ENCODE measurements at regions of chr7 and their contacts with region 1.

Region 1: GRCh38 chr7:65307651-65308299 is 65.9 kb upstream of the ZNF92 start:
- DNase-seq: peak; percentile 37
- H3K4me3 ChIP-seq: no peak overlapping the region
- H3K27ac ChIP-seq: no peak overlapping the region
- H3K27me3 ChIP-seq: no peaks in the 10 kb centered on the region
- CTCF ChIP-seq: peak; percentile 86

Region 2: DNA sequence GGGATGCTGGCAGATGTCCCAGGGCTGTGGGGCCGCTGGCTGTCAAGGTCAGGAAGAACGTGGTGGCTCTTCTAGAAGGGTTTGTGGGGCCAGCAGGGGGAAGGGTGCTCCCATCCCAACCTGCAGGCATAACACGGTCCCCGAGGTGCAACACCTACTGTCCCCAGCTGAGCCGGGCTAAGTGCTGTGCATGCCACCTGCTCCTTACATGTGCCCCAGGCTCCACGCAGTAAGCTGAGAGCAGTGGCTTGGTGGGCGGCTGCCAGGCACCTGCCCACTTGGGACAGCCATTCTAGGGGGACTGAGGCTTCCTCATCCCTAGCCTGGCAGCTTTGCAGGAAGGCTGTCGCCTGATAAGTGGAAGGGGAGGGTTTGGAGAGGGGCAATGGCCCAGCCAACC is 1115.0 kb before region 1 on chr7:
- CTCF ChIA-PET with region 1: no interaction called
- POLR2A ChIA-PET with region 1: no interaction called
- DNase-seq: no peak
- H3K4me3 ChIP-seq: no peak overlapping the region
- H3K27ac ChIP-seq: no peak overlapping the region
- H3K27me3 ChIP-seq: no peaks in the 10 kb centered on the region
- CTCF ChIP-seq: no peak

Region 3: DNA sequence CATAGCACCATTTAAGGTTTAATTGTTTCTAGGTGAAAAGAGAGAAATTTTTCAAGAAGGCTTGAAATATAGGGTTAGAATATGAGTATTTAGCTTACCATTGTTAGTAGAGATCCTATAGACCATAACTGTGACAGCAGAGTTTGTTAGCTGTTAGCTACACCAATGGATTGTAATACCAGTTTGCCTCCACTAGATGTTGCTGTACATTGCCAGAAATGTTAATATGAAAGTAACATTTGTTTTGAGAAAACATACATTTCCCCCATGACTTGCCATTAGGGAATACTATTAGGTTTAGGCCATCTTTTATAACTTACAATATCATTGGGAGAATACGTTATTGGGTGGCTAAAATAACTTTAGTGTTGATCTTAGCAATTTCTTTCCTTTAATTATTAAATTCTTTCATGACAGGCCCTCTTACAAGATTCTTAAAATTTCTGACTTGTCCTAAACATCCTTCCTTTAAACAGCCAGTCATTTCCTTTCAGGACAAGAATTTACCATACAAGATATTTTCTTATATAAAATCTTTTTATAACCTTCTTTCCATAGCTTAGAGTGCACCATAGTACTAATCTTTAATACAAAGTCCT is 356.4 kb before region 1 on chr7:
- CTCF ChIA-PET with region 1: interaction called, 117 read pairs
- POLR2A ChIA-PET with region 1: no interaction called
- DNase-seq: peak; percentile 1
- H3K4me3 ChIP-seq: no peak overlapping the region
- H3K27ac ChIP-seq: no peak overlapping the region
- H3K27me3 ChIP-seq: peaks cover 17% of the 10 kb centered on the region
- CTCF ChIP-seq: peak; percentile 79

Region 4: GRCh38 chr7:65250697-65251395 is 56.9 kb before region 1 on chr7:
- CTCF ChIA-PET with region 1: no interaction called
- POLR2A ChIA-PET with region 1: no interaction called
- DNase-seq: no peak
- H3K4me3 ChIP-seq: no peak overlapping the region
- H3K27ac ChIP-seq: no peak overlapping the region
- H3K27me3 ChIP-seq: no peaks in the 10 kb centered on the region
- CTCF ChIP-seq: no peak

Region 5: DNA sequence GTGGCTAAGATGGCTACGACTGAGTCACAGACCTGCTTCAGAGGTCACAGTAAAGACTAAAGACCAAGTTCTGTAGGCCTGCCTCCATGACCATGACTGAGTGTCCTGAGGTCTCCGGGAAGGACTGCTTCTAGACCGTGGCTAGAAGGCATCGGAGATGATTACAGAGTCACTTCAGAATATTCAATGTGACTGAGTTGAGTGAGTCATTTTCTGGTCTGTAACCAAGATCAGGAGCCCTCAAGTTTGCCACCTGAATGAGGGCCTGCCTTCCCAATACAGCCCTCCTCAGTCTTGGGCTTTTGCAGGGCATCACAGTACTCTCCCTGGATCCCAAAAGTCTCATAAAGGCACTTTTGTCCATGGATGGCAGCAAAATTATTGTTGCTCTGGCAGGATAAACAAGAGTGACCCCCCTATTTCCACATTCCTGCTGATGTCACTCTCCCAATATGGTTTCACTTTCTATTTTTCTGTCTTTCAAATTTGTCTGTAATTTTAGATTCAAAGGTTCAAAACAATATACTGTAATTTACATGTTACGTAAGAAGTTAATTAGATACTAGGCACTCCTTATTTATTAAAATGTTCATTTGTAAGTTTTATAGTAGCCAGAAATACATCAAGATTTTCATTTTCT is 18.1 kb after region 1 on chr7:
- CTCF ChIA-PET with region 1: interaction called, 20 read pairs
- POLR2A ChIA-PET with region 1: no interaction called
- DNase-seq: no peak
- H3K4me3 ChIP-seq: no peak overlapping the region
- H3K27ac ChIP-seq: no peak overlapping the region
- H3K27me3 ChIP-seq: no peaks in the 10 kb centered on the region
- CTCF ChIP-seq: no peak

Region 6: GRCh38 chr7:65820287-65820950 is 512.6 kb after region 1 on chr7:
- CTCF ChIA-PET with region 1: no interaction called
- POLR2A ChIA-PET with region 1: no interaction called
- DNase-seq: no peak
- H3K4me3 ChIP-seq: no peak overlapping the region
- H3K27ac ChIP-seq: no peak overlapping the region
- H3K27me3 ChIP-seq: no peaks in the 10 kb centered on the region
- CTCF ChIP-seq: no peak

Measured in AG04450 (cell line).